Activated CD4-positive, alpha-beta T cell treated with anti-CD3 and anti-CD28 coated beads for 36 hours (primary cell): ENCODE measurements at regions of chr1 and their contacts with region 1.

Region 1: DNA sequence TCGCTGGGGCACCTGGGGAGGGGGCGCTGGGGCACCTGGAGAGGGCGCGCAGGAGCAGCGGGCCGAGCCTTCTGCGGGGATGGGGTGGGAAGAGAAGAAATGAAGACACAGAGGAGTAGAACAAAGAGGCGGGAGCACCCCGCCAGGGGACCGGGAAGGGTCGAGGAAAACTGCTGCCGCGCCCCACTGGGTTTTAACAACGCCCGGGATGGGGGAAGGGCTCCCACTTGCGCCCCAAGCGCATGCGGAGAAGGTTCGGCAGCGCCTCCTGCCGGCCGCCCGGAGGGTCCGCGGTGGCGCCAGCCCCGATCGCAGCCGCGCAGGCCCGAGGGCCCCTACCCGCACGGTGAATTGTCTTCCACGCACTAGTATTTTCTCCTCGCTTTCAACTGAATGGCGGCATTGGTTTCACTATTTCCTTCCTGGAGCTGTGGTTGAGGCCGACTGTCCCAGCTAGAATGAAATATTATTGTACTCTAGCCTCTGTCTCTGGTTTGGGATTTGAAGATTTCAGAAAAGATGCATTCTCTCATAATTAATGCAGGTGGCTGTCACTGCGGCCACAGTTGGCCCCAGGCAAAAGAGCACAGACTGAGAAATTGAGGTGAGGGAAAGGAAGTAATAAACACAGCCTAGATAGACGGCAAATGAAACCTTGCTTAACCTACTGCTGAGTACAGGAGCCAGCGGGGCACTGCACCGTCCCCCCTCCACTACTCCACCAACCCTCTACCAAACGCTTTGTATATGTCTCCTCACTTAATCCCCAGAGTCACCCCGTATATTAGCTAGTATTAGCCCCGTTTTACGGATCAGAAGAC is 57.3 kb downstream of the MAB21L3 start:
- DNase-seq: peak; percentile 92
- ATAC-seq: peak; percentile 99
- H3K4me3 Mint-ChIP-seq: peak overlapping the region; percentile 60
- H3K27ac Mint-ChIP-seq: peak overlapping the region; percentile 79
- H3K4me1 Mint-ChIP-seq: peaks cover 10% of the 10 kb centered on the region
- H3K27me3 Mint-ChIP-seq: no peaks in the 10 kb centered on the region

Region 2: DNA sequence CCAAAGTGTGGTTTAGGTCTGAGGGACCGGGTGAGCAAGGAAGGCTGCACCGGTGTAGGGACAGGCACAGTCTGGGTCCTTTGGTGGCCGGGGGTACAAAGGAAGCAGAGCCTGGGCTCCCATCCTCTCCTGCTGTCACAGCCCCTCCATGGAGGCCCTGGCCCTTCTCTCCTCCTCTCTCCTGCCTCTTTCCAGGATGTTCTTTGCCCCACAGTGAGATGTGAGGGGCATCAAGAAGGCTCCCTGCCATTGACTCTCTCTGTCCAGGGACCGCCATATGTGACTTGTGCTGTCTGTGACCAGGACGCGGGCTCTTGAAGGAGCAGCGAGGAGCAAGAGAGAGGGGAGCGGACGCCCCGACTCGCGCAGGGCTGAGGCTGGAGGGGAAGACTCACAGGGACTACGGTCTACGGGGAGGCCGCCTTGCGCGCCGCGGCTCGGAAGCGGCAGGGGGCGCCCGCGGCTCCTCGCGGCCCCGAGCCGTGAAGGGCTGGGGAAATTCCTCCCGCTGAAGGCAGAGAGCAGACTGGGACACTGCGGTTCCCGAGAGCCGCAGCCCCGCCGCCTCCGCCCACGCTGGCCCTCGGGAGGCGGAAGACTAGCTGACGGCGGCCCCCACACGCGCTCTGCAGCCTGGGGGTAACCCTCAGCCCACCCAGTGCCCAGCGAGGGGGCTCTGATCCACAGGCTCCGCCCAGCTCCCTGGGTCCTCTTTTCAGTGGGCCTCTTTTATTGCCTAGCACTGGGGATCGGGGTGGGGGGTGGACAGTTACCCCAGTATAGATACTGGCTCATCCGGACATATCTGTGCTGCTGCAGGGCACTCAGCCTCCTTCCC is 16.5 kb before region 1 on chr1:
- CTCF ChIA-PET with region 1: interaction called, 17 read pairs
- POLR2A ChIA-PET with region 1: no interaction called
- intact Hi-C with region 1: loop called (anchors 1 to 2 kb)
- DNase-seq: peak; percentile 87
- ATAC-seq: peak; percentile 98
- H3K4me3 Mint-ChIP-seq: peak overlapping the region; percentile 49
- H3K27ac Mint-ChIP-seq: peak overlapping the region; percentile 70
- H3K4me1 Mint-ChIP-seq: peaks cover 18% of the 10 kb centered on the region
- H3K27me3 Mint-ChIP-seq: peaks cover 4% of the 10 kb centered on the region